A549 (cell line): ENCODE measurements at regions of chr1 and their contacts with region 1.

Region 1: DNA sequence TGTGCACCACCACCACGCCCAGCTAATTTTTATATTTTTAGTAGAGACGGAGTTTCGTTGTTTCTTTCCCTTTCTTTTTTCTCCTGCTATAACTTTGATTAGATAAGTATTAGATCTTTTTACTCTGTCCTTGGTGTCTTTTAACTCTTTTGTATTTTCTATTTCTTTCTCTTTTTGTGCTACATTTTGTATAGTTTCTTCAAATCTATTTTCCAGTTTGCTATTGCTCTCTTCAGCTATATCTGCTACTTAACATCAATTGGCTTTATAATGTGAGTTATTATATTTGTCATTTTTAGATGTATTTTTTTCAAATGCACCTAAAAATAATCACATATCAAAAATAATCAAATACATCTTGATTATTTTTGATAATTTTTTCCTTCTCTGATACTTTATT is 16.0 kb upstream of the ERRFI1 start:
- DNase-seq: no peak
- ATAC-seq: no peak
- H3K4me3 ChIP-seq: no peak overlapping the region
- H3K27ac ChIP-seq: peak overlapping the region in 1 of 2 experiments; percentile 84; a peak in 1 of 6 replicates
- H3K4me1 ChIP-seq: peaks cover 32% of the 10 kb centered on the region
- CTCF ChIP-seq: no peak
- EP300 ChIP-seq: no peak
- POLR2A ChIP-seq: no peak
- RAD21 ChIP-seq: no peak

Region 2: DNA sequence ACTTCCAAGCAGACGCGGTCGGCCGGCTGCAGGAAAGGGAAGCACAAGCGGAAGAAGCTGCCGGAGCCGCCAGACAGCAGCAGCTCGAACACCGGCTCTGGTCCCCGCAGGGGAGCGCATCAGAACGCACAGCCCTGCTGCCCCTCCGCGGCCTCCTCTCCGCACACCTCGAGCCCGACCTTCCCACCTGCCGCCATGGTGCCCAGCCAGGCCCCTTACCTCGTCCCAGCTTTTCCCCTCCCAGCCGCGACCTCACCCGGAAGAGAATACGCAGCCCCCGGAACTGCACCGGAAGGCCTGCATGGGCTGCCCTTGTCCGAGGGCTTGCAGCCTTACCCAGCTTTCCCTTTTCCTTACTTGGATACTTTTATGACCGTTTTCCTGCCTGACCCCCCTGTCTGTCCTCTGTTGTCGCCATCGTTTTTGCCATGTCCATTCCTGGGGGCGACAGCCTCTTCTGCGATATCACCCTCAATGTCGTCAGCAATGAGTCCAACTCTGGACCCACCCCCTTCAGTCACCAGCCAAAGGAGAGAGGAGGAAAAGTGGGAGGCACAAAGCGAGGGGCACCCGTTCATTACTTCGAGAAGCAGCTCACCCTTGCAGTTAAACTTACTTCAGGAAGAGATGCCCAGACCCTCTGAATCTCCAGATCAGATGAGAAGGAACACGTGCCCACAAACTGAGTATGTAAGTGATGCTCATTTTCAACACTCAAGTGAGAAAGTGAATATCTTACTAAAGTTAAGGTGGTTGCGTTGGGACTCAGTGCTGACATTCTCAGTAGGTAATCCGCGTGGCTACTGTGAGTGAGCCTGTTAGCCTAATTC is 214.8 kb before region 1 on chr1:
- CTCF ChIA-PET with region 1: no interaction called
- POLR2A ChIA-PET with region 1: no interaction called
- DNase-seq: no peak
- ATAC-seq: no peak
- H3K4me3 ChIP-seq: no peak overlapping the region
- H3K27ac ChIP-seq: no peak overlapping the region
- H3K4me1 ChIP-seq: no peaks in the 10 kb centered on the region
- CTCF ChIP-seq: no peak
- EP300 ChIP-seq: no peak
- POLR2A ChIP-seq: no peak
- RAD21 ChIP-seq: no peak

Region 3: DNA sequence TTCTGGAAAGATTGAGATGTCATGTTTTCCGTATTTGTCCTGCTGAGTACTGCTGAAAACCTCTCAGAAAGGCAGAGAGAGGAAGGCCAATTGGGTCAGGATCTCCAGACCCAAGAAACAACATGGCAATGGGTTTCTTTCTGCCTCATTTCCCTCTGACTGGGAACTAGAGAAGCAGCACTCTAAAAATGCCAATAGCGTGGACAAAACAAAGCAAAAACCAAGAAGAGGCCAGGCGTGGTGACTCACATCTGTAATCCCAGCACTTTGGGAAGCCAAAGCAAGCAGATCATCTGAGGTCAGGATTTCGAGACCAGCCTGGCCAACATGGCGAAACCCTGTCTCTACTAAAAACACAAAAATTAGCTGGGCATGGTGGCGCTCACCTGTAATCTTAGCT is 119.8 kb before region 1 on chr1:
- CTCF ChIA-PET with region 1: no interaction called
- POLR2A ChIA-PET with region 1: no interaction called
- DNase-seq: no peak
- ATAC-seq: no peak
- H3K4me3 ChIP-seq: no peak overlapping the region
- H3K27ac ChIP-seq: no peak overlapping the region
- H3K4me1 ChIP-seq: no peaks in the 10 kb centered on the region
- CTCF ChIP-seq: no peak
- EP300 ChIP-seq: no peak
- POLR2A ChIP-seq: no peak
- RAD21 ChIP-seq: no peak

Region 4: DNA sequence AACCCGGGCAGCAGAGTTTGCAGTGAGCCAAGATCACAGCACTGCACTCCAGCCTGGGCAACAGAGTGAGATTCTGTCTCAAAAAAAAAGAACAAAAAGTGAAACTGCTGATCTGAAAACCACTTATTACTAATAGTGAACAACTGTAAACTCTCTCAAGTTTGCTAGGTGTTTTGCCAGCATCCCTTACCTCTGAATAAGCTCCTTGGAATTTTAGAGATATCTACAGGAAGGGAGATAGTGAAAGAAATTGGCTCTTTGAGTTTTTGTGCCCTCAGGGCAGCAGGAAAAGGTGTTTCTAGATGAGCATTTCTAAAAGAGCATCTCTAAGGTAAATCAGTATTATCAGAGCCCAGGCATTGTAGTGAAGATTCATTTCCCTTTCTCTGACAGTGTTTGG is 53.6 kb before region 1 on chr1:
- CTCF ChIA-PET with region 1: no interaction called
- POLR2A ChIA-PET with region 1: no interaction called
- DNase-seq: no peak
- ATAC-seq: no peak
- H3K4me3 ChIP-seq: no peak overlapping the region
- H3K27ac ChIP-seq: peak overlapping the region; percentile 42 to 48; a peak in 3 of 6 replicates
- H3K4me1 ChIP-seq: peaks cover 7% of the 10 kb centered on the region; the same call in 2 of the 3 replicates
- CTCF ChIP-seq: no peak
- EP300 ChIP-seq: no peak
- POLR2A ChIP-seq: no peak
- RAD21 ChIP-seq: no peak

Region 5: GRCh38 chr1:8090241-8090702 is 48.1 kb after region 1 on chr1:
- CTCF ChIA-PET with region 1: interaction called, 6 read pairs
- POLR2A ChIA-PET with region 1: interaction called, 10 read pairs
- DNase-seq: no peak
- ATAC-seq: peak in 1 of 2 experiments; percentile 57; a peak in 2 of 6 replicates
- H3K4me3 ChIP-seq: no peak overlapping the region
- H3K27ac ChIP-seq: peak overlapping the region; percentile 66 to 94
- H3K4me1 ChIP-seq: peaks cover 53% of the 10 kb centered on the region
- CTCF ChIP-seq: no peak
- EP300 ChIP-seq: no peak
- POLR2A ChIP-seq: no peak
- RAD21 ChIP-seq: no peak